Psoas muscle (tissue), 8 donors: ENCODE measurements at regions of chr20 and their contacts with region 1.

Region 1: DNA sequence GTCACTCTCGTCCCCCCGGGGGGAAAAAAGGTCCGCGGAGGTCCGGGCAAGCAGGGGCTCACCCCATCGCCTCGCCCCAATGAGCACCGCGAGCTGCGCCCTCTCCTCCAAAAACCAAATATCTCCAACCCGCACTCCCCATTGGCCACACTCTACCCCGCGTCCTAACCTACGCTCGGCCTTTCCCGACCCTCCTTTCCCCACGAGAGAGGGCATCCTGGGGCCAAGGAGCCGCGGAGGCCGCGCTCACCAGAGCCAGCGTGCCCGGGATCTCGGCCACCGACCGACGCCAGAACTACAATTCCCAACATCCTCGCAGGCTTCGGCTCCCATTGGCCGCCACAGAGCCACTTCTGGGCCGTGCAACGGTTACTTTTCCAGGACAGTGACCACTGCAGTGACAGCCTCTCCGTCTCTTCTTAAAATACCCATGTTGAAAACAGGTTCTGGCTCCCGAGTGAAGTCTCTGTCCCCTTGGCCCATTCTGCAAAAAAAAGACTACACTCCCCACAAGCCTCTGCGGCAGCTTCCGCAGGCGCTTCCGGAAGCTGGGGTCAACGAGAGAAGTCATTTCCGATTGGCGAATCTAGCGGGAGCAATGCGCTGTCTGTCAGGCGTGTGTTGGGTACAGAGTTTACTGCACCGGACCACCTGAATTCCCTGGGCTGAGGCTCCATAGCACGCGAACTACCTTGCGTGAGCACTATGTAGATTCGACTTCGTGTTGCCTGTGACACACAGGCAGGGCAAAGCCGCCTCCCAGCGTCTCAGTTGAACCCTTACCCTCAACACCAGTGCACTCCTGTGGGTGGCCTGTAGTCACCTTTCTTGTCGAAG is at the start of gene ZNF343:
- DNase-seq: peak; percentile 79 to 88
- ATAC-seq: peak; percentile 96 to 98 (median 98)
- H3K4me3 ChIP-seq: peak within 1 kb of the TSS; percentile 88
- H3K27ac ChIP-seq: peak within 1 kb of the TSS; percentile 96
- H3K4me1 ChIP-seq: no peaks in the 10 kb centered on the region
- H3K27me3 ChIP-seq: no peaks in the 10 kb centered on the region
- CTCF ChIP-seq: no peak
- total RNA-seq, gene ZNF343: 7.8 to 15.3 (median 10.9) TPM

Region 2: GRCh38 chr20:2446845-2447244 is 62.0 kb before region 1 on chr20:
- intact Hi-C with region 1: no loop called
- DNase-seq: no peak
- ATAC-seq: no peak
- H3K4me3 ChIP-seq: no peak overlapping the region
- H3K27ac ChIP-seq: no peak overlapping the region
- H3K4me1 ChIP-seq: no peaks in the 10 kb centered on the region
- H3K27me3 ChIP-seq: no peaks in the 10 kb centered on the region
- CTCF ChIP-seq: no peak

Region 3: DNA sequence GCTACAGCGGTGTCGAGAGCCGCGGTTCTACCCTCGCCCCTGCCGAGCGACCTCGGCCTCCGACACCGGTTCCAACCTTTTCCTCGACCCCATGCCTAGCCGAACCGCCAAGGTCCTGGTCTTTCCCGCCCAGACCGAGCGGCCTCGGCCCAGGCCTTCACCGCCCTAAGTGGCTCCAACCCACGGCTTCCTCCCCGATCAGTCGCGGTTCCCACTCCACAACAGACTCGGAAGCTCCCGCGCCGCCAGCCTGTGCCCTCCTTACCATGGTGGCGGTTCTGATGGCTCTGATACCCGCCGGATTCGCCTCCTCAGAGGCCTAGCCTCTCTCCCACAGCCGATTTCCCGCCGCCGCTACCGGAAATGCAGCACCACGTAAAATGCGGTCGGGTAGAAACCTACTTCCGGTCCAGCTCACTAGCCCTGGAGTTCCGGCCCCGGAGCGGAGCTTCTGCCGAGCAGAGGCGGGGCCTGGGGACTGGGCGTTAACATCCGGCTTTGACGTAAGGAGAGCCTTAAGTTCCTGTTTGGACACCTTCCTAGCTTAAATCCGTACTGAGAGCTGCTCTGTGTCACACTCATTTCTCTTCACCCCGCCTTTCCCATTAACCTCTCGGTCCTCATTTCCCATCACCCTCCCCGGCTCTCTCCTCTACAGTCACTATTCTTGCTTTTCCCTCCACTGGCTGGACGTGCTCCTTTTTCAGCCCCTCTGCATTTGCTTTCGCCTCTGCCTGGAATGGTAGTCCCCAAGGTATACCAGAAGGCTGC is 38.2 kb before region 1 on chr20 and contains the start of gene SNRPB:
- intact Hi-C with region 1: loop called in 1 of 2 experiments (anchors 5 kb)
- DNase-seq: peak; percentile 95 to 98
- ATAC-seq: peak; percentile 98 to 99 (median 99)
- H3K4me3 ChIP-seq: peak within 1 kb of the TSS; percentile 91
- H3K27ac ChIP-seq: peak within 1 kb of the TSS; percentile 88
- H3K4me1 ChIP-seq: peaks cover 22% of the 10 kb centered on the region
- H3K27me3 ChIP-seq: no peaks in the 10 kb centered on the region
- CTCF ChIP-seq: no peak
- total RNA-seq, gene SNRPB: 41.9 to 114 (median 78.8) TPM